Activated CD8-positive, alpha-beta T cell treated with anti-CD3 and anti-CD28 coated beads for 36 hours (primary cell): ENCODE measurements at regions of chr1 and their contacts with region 1.

Region 1: DNA sequence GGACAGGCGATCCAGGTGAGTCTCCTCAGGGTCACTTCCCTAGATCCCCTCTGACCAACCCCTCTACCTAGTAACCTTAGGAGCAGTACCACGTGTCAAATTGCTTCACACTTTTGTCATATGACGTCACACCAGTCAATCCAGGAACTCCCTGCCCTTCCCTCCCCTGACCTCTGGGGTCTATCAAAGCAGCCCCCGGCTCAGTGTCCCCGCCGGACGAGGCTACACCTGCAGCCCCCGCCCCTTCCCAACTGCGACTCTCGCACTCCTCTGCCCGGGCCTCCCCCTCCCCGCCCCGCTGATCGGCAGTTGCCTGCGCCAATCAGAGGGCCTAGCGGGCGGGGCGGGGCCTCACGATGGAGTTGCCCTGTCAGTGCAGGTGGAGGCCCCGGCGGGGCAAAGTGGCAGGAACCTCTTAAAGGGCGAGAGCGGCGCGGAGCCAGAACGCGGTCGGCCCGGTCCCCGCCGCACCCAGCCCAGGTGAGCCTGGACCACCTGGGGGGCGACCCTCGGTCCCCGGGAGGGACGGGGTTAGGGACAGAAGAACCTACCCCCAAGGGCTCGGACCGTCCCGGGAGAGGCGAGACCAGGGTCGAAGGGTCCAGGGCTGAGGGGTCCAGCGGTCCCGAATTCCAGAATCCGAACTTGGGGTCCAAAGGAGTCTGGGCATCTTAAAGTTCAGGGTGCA is 27.5 kb upstream of the EPB41 start:
- DNase-seq: peak; percentile 92
- ATAC-seq: peak; percentile 76
- H3K4me3 Mint-ChIP-seq: peak overlapping the region; percentile 86
- H3K27ac Mint-ChIP-seq: peak overlapping the region; percentile 98
- H3K4me1 Mint-ChIP-seq: peaks cover 52% of the 10 kb centered on the region
- H3K27me3 Mint-ChIP-seq: no peaks in the 10 kb centered on the region
- CTCF ChIP-seq: no peak

Region 2: DNA sequence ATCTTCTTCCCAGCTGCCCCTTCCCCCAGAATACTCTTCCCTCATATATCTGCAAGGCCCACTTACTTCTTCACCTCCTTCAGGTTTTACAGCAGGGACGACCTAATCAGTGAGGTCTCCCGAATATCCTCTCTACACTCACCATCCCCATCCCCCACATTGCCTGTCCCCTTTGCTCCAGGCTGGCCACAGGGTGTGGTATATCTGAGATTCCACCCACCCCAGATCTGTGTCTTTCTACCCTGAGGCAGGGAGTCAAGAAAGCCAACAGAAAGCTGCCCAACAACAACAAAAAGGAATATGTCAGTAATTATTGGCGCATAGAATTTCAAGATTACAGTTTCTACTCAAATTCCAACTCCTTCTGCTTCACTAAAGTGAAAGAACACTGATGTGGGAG is 104.9 kb before region 1 on chr1:
- CTCF ChIA-PET with region 1: interaction called, 12 read pairs
- POLR2A ChIA-PET with region 1: interaction called, 3 read pairs
- intact Hi-C with region 1: no loop called
- DNase-seq: no peak
- ATAC-seq: no peak
- H3K4me3 Mint-ChIP-seq: no peak overlapping the region
- H3K27ac Mint-ChIP-seq: no peak overlapping the region
- H3K4me1 Mint-ChIP-seq: peaks cover 4% of the 10 kb centered on the region
- H3K27me3 Mint-ChIP-seq: peaks cover 1% of the 10 kb centered on the region
- CTCF ChIP-seq: no peak

Region 3: DNA sequence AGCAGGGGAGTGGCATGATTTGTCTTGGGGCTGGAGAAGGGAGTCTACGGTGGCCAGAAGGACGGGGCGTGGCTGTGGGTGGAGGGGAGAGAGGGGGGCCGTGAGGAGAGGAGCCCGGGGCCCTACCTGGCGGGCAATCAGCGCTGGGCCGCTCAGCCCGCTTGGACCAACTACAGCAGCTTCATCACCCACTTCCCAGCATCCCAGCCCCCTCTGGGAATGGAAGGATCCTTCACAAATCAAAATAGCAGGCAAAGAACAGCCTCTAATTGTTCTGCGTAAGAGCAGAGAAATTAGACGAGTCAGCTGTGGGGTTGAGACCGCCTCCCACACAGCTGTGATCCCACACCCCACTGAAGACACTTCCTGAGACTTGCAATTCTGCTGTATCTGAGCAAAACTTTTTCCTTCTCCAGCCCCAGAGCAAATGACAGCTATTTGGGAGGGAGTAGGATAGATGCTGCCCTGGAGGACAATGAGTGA is 31.4 kb before region 1 on chr1:
- CTCF ChIA-PET with region 1: no interaction called
- POLR2A ChIA-PET with region 1: no interaction called
- intact Hi-C with region 1: no loop called
- DNase-seq: no peak
- ATAC-seq: no peak
- H3K4me3 Mint-ChIP-seq: no peak overlapping the region
- H3K27ac Mint-ChIP-seq: no peak overlapping the region
- H3K4me1 Mint-ChIP-seq: no peaks in the 10 kb centered on the region
- H3K27me3 Mint-ChIP-seq: peaks cover 6% of the 10 kb centered on the region
- CTCF ChIP-seq: no peak

Region 4: GRCh38 chr1:29033829-29034466 is 147.1 kb after region 1 on chr1:
- CTCF ChIA-PET with region 1: interaction called, 465 read pairs
- POLR2A ChIA-PET with region 1: interaction called, 4 read pairs
- intact Hi-C with region 1: loop called (anchors 2 kb)
- DNase-seq: no peak
- ATAC-seq: peak; percentile 51
- H3K4me3 Mint-ChIP-seq: no peak overlapping the region
- H3K27ac Mint-ChIP-seq: peak overlapping the region; percentile 64
- H3K4me1 Mint-ChIP-seq: peaks cover 2% of the 10 kb centered on the region
- H3K27me3 Mint-ChIP-seq: no peaks in the 10 kb centered on the region
- CTCF ChIP-seq: peak; percentile 78

Region 5: GRCh38 chr1:29081201-29081600 is 194.3 kb after region 1 on chr1:
- CTCF ChIA-PET with region 1: interaction called, 11 read pairs
- POLR2A ChIA-PET with region 1: no interaction called
- intact Hi-C with region 1: no loop called
- DNase-seq: no peak
- ATAC-seq: no peak
- H3K4me3 Mint-ChIP-seq: no peak overlapping the region
- H3K27ac Mint-ChIP-seq: peak overlapping the region; percentile 61
- H3K4me1 Mint-ChIP-seq: peaks cover 13% of the 10 kb centered on the region
- H3K27me3 Mint-ChIP-seq: no peaks in the 10 kb centered on the region
- CTCF ChIP-seq: no peak

Region 6: GRCh38 chr1:29124366-29125236 is 237.7 kb after region 1 on chr1:
- CTCF ChIA-PET with region 1: interaction called, 10 read pairs
- POLR2A ChIA-PET with region 1: no interaction called
- intact Hi-C with region 1: loop called (anchors 5 kb)
- DNase-seq: peak; percentile 86
- ATAC-seq: peak; percentile 68
- H3K4me3 Mint-ChIP-seq: peak overlapping the region; percentile 73
- H3K27ac Mint-ChIP-seq: no peak overlapping the region
- H3K4me1 Mint-ChIP-seq: no peaks in the 10 kb centered on the region
- H3K27me3 Mint-ChIP-seq: peaks cover 21% of the 10 kb centered on the region
- CTCF ChIP-seq: no peak

Region 7: DNA sequence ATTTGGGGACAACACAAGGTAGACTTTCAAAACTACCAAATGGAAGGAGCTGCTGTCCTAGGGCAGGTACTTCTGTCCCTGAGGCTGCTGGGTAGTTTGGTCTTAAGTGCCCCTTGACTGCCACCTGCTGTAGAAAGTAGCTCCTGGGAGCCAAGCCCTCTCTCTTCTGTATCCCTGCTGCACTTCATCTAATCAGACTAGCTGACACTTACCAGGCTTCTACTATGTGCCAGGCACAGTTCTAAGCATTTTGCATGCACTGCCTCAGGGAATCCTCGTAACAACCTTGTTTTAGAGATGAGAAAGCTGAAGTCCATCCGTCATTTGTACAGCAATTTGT is 310.7 kb after region 1 on chr1:
- CTCF ChIA-PET with region 1: interaction called, 40 read pairs
- POLR2A ChIA-PET with region 1: interaction called, 3 read pairs
- intact Hi-C with region 1: loop called (anchors 2 kb)
- DNase-seq: peak; percentile 61
- ATAC-seq: peak; percentile 94
- H3K4me3 Mint-ChIP-seq: no peak overlapping the region
- H3K27ac Mint-ChIP-seq: no peak overlapping the region
- H3K4me1 Mint-ChIP-seq: peaks cover 12% of the 10 kb centered on the region
- H3K27me3 Mint-ChIP-seq: no peaks in the 10 kb centered on the region
- CTCF ChIP-seq: peak; percentile 38